Left cardiac atrium (tissue), 4 donors: ENCODE measurements at regions of chr17 and their contacts with region 1.

Region 1: GRCh38 chr17:61314368-61315078 is 85.1 kb upstream of the TBX2 start:
- DNase-seq: peak; percentile 58
- ATAC-seq: peak; percentile 86 to 93

Region 2: GRCh38 chr17:61260071-61260797 is 54.3 kb before region 1 on chr17:
- intact Hi-C with region 1: loop called in 1 of 2 experiments (anchors 5 kb)
- DNase-seq: peak; percentile 24
- ATAC-seq: peak; percentile 76 to 89

Region 3: GRCh38 chr17:61361084-61361483 is 46.6 kb after region 1 on chr17:
- intact Hi-C with region 1: no loop called
- DNase-seq: no peak
- ATAC-seq: peak in 1 of 2 donors; percentile 65

Region 4: DNA sequence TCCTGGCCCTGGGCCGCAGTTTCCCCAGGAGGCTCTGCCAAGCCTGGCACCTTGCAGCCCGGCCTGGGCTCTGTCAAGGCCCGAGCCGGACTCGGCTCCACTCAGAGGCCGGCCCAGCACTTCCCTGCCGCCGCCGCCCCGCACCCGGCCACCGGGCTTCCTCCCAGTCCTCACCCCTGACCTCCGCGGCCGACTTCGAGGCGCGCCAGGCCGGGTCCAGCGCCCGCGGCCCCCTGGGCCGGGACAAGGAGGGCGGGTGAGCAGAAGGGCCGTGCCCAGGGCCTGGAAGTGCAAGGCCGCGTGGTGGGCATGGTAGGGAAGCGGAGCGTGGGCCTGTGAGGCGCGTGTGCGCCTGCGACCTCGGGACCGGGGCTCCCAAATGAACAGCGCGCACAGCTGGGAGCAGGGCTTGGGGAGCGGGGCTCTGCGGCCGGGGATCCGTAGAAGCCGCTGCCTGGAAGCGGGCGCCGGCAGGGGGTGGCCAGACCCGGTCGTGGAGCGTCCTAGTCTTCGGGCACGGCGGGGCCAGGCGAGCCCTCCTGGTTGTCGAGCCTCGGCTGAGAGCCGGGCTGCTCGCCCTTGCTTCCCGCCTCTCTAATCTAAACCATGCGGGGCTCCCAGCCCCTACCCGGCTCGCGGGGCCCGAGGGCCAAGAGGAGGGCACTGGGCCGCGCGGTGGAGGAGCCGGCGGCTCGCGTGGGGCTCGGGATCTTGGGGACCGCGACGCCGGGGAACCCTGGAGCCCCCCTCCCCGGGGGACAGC is 137.2 kb after region 1 on chr17:
- intact Hi-C with region 1: no loop called
- DNase-seq: no peak
- ATAC-seq: peak; percentile 48 to 49